H1 (cell line): ENCODE measurements at regions of chr4 and their contacts with region 1.

Region 1: DNA sequence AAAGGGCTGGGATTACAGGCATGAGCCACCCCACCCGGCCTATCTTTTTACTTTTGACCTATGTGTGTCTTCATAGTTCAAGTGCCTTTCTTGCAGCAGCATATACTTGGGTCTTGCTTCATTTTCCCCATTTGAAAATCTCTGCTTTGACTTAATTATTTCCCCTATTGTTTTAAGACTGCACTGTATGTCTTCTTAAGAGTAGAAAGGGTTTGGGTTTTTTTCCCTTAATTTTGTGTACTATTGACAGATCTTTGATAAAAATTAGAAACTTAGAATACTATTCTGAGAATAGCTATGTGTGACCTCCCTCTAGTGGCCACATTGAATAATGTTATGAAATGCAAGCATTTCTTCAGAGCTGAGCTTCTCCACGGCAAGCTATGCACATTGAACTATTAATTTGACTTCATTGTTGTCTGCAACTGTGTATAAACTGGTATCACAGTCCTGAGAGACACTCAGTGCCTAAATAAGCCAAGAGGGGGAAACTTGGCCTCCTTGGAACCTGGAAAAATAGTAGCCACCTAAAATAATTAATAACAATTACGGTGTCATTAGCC is 8.7 kb upstream of the SLC25A4 start:
- DNase-seq: no peak
- H3K4me3 ChIP-seq: no peak overlapping the region
- H3K27ac ChIP-seq: no peak overlapping the region
- H3K4me1 ChIP-seq: no peaks in the 10 kb centered on the region
- H3K27me3 ChIP-seq: peaks cover 0 to 4% (median 0%) of the 10 kb centered on the region in 4 experiments; a peak in 1 of 7 replicates
- CTCF ChIP-seq: peak in 2 of 3 experiments; percentile 60 to 63; a peak in 3 of 4 replicates
- EP300 ChIP-seq: no peak
- POLR2A ChIP-seq: no peak
- RAD21 ChIP-seq: peak; percentile 84 to 86

Region 2: DNA sequence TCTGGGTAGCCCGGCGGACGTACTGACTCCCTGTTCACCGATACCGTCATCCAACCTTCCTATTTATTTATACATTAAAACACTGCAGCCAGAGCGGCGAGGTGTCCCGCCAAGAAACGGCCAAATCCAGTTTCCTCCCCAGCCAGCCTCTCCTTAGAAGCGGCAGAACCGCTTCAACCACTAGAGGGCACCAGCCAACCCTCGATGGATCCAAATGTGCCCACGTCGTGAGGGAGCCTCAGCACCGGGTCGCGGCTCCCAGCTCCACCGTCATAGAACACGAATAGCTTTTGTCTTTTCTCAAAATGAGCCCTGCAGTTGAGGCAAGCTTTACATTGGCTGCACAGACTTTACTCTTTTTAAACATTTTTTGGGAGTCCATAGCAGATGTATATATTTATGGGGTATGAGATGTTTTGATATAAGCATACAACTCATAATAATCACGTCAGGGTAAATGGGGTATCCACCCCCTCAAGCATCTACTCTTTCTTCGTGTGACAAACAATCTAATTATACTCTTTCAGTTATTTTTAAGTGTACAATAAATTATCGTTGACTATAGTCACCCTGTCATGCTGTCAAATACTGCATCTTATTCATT is 129.1 kb before region 1 on chr4:
- CTCF ChIA-PET with region 1: interaction called, 16 read pairs
- POLR2A ChIA-PET with region 1: no interaction called
- DNase-seq: peak in 1 of 2 experiments; percentile 93
- H3K4me3 ChIP-seq: peak overlapping the region; percentile 13 to 55 (median 33); a peak in 7 of 8 replicates
- H3K27ac ChIP-seq: no peak overlapping the region
- H3K4me1 ChIP-seq: peaks cover 0 to 9% (median 5%) of the 10 kb centered on the region in 4 experiments; a peak in 3 of 7 replicates
- H3K27me3 ChIP-seq: peaks cover 0 to 25% (median 18%) of the 10 kb centered on the region in 4 experiments; a peak in 6 of 7 replicates
- CTCF ChIP-seq: peak; percentile 85 to 92 (median 88)
- EP300 ChIP-seq: no peak
- POLR2A ChIP-seq: no peak
- RAD21 ChIP-seq: peak; percentile 87 to 91

Region 3: DNA sequence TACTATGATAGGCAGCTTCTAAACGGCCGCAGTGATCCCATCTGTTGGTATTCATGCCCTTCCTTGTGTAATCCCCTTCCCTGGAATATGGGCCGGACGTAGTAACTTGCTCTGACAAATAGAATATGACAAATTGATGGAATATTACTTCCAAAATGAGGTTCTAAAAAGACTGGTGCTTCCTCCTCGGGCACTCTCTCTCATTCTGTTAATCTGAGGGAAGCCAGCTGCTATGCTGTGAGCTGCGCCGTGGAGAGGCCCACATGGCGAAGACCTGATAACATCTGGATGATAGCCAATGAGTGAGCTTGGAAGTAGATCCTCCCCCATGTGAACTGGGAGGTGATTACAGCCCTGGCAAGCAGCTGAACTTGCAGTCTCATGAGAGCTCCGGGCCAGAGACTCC is 18.6 kb before region 1 on chr4:
- CTCF ChIA-PET with region 1: interaction called, 11 read pairs
- POLR2A ChIA-PET with region 1: no interaction called
- DNase-seq: peak in 1 of 2 experiments; percentile 52
- H3K4me3 ChIP-seq: no peak overlapping the region
- H3K27ac ChIP-seq: no peak overlapping the region
- H3K4me1 ChIP-seq: peaks cover 0 to 9% (median 7%) of the 10 kb centered on the region in 4 experiments; a peak in 5 of 7 replicates
- H3K27me3 ChIP-seq: no peaks in the 10 kb centered on the region
- CTCF ChIP-seq: no peak
- EP300 ChIP-seq: no peak
- POLR2A ChIP-seq: peak in 1 of 2 experiments; percentile 47; a peak in 2 of 3 replicates
- RAD21 ChIP-seq: 0 out of 4 replicates have a peak, but pooled peaks of 1 of the 2 experiments have one; percentile 1

Region 4: DNA sequence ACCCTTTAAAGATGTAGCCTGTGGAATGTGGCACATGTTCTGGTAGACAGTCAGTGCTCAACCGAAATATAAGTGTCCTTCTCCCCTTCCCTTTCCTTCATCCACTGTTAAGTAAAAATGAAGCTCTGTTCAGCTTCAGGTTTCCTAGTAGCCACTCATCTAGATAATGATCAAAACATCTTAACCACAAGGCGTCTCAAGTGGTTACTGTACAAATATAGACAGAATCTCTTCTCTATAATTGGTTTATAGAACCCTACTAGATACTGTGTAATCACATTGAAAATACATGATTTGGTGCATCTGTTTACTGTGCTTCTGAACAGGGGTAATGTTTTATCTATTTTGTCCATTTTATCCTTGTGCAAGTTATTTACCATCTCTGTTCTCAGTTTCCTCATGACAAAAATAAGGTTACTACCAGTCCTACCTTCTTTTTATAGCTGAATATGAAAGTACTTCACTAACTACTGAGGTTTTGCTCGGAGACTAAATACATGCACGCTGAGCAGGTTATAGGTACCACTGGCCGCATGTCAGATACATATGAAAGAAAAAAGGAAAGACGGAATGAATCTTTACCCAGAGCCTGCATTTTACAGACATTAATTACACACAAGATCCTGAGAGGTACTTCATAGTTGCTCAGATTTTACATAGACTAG is 11.6 kb before region 1 on chr4:
- CTCF ChIA-PET with region 1: interaction called, 11 read pairs
- POLR2A ChIA-PET with region 1: no interaction called
- DNase-seq: no peak
- H3K4me3 ChIP-seq: no peak overlapping the region
- H3K27ac ChIP-seq: no peak overlapping the region
- H3K4me1 ChIP-seq: peaks cover 0 to 15% (median 6%) of the 10 kb centered on the region in 4 experiments
- H3K27me3 ChIP-seq: peaks cover 0 to 10% (median 9%) of the 10 kb centered on the region in 4 experiments; a peak in 6 of 7 replicates
- CTCF ChIP-seq: no peak
- EP300 ChIP-seq: no peak
- POLR2A ChIP-seq: no peak
- RAD21 ChIP-seq: no peak